GM10248 (cell line): ENCODE measurements at regions of chr4 and their contacts with region 1.

Region 1: DNA sequence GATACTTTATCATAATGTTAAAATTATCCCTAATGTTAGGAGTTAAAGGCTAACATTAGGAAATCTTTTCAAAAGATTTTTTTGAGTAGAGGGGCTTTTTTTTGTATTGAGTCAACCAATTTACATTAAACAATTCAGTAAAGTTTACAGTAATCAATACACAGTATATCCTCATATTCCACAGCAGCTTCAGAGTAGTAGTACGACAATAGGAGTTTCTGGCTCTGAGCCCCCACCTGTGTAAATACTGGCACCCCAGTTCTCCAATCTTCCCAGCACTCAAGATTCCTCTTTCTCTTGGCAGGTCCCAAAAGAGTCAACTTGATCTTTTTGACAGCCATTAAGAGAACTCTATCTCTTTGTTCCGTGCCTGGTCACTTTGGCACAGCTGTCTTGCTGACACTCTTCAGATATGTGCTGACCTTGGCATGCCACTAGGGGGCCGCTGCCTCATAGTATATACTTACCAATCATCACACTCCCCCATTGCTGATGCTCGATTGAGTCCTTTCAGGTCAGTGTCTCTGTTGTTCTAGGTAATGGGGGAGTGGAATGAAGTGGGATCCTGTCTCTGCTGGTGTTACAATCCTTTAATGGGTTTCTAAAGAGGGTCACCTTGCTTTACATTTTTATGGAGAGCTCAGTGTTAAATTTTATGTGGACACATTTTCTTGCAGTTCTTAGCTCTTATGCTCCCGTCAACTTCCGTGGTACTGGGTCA is 19.5 kb upstream of the CCNI start:
- DNase-seq: peak; percentile 69
- CTCF ChIP-seq: peak; percentile 80

Region 2: GRCh38 chr4:77044461-77045150 is 50.7 kb before region 1 on chr4:
- CTCF ChIA-PET with region 1: interaction called, 11 read pairs
- POLR2A ChIA-PET with region 1: no interaction called
- DNase-seq: peak; percentile 24
- CTCF ChIP-seq: peak; percentile 64

Region 3: DNA sequence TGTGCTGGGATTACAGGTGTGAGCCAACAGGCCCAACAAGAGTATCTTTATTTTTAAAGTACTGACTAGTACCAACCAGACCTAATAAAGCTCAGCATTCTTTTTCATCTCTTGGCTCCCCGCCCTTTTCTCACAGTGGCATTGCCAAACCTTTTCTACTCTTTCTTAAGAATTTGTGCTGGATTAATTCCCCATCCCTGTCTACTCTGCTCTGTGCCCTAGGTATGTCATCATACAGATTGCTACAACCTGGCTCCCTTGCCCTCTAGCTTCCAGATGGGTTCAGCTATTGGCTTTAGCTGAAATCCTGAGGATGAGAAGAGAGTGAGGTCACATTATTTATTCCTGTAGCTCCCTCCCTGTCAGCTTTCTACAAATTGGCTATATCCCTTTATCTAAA is 15.5 kb after region 1 on chr4:
- CTCF ChIA-PET with region 1: interaction called, 42 read pairs
- POLR2A ChIA-PET with region 1: no interaction called
- DNase-seq: no peak
- CTCF ChIP-seq: no peak

Region 4: DNA sequence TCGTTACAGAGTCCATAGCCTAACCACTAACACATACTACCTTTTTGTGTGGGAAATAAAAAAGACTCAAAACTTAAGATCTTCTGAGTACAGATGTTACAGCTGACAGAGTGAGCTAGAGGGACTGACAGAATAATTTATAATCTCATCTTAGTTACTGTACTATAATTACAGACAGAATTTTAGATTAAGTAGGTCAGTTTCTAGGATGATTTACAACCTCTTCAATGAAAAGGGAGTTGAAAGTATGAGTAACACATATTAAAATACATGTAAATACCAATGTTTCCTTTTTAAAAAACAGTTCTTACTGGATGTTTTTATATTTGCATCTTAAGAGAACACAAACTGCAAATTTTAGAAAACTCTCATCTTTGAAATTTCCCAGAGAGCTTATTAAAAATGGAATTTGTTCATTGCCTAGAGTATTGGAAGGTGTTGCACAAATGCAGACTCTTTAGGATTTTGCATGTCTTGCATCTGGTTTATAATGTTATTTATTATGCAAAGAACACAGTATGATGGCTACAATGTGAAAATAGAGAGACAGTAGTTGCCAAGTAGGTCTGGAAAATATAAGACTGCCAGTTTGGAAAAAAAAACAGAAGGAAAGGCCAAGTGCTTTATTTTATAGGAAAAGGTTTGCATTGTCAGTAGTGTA is 37.5 kb after region 1 on chr4:
- CTCF ChIA-PET with region 1: interaction called, 15 read pairs
- POLR2A ChIA-PET with region 1: no interaction called
- DNase-seq: no peak
- CTCF ChIP-seq: no peak

Region 5: GRCh38 chr4:77156533-77156911 is 61.3 kb after region 1 on chr4:
- CTCF ChIA-PET with region 1: interaction called, 26 read pairs
- POLR2A ChIA-PET with region 1: no interaction called
- DNase-seq: peak; percentile 95
- CTCF ChIP-seq: no peak

Region 6: DNA sequence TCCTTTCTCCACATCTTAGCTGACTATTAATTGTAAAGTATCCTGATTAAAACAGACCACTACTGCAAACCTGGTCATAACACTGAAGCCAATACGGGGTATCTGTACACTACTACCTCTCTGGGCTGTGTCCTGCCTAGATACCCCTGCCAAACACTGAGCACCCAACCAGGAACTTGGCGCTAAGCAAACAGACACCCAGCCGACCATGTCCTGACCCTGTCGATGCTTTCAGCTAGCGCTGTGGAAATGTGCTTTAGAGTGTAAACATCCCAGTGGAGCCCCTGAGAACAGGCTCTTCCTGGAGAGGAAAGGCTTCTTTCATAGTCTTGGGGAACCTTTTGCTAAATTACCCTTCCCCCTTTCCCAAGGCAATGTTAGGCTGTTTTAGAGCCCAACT is 114.7 kb after region 1 on chr4:
- CTCF ChIA-PET with region 1: interaction called, 275 read pairs
- POLR2A ChIA-PET with region 1: no interaction called
- DNase-seq: no peak
- CTCF ChIP-seq: no peak